PC-9 (cell line): ENCODE measurements at regions of chr3 and their contacts with region 1.

Region 1: DNA sequence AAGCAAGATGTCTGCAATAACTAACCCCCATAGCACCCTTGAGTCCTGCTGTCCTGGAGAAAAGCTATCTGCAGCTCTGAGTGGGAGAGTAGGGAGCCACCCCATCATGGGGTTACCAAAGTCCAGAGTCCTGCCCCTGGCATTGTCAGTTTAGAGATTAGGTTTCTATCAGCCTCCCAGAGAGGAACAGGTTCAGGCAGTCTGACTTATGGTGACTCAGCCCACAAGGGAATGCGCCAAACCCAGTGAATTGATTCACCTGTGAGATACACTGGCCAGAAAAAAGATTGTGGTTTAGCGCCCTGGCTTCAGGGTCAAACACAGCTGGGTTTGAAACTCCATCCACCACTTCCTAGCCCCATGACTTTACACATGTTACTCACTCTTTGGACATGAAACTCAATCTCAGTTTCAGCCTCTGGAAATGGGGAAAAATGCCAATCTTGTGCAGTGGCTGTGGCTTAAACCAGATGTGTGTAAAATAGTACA is 263.6 kb upstream of the HES1 start:
- DNase-seq: peak; percentile 94 to 100
- H3K4me3 ChIP-seq: no peak overlapping the region; the same call in 1 of the 2 replicates
- H3K27ac ChIP-seq: peak overlapping the region; percentile 94
- H3K4me1 ChIP-seq: peaks cover 83% of the 10 kb centered on the region
- H3K27me3 ChIP-seq: no peaks in the 10 kb centered on the region
- CTCF ChIP-seq: no peak

Region 2: DNA sequence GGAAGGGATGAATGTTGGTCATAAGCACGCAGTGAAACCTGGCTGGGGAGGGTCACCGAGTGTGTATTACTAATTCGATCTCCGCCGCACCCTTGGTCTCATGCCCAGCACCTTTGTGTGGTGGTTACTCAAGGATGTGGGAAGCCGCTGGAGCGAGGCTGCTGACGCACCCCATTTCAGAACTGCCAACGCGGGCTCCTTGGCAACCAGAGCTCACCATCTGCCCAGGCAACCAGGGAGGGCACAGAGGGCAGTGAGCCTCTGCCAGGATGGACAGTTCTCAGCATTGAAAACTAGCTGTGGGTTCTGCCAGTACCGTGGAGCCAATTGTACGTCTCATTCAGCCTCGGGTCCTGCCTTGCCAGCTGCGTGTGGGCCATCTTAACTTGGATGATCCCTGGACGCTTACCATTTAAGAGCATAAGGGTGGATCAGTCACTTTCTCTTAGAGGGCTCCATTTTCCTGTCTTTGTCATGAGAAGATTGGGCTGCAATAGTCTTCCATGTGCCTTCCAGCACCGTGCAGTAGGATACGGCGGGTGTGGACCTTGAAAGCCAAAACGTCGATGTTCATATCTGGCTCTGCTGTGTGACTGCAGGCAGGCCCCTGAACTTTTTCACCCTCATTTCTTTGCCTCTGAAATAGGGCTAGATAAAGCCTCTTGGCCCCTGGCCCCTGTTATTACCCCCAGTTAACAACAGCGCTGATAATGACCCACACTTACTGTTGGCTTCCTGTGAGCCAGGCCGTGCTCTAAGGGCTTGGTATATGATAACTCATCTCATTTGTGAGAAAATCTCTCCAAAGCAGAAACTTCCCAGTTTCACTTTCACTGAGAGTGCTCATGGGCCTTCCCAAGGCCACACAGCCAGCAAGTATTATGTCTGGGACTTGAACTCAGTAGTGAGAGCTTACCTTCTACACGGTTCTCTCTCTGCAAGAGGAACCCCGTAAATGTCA is 40.5 kb before region 1 on chr3:
- CTCF ChIA-PET with region 1: interaction called, 3 read pairs
- POLR2A ChIA-PET with region 1: interaction called, 7 read pairs
- intact Hi-C with region 1: loop called (anchors 1 kb)
- DNase-seq: peak; percentile 87 to 97
- H3K4me3 ChIP-seq: no peak overlapping the region
- H3K27ac ChIP-seq: peak overlapping the region; percentile 96
- H3K4me1 ChIP-seq: peaks cover 89% of the 10 kb centered on the region
- H3K27me3 ChIP-seq: no peaks in the 10 kb centered on the region
- CTCF ChIP-seq: no peak

Region 3: DNA sequence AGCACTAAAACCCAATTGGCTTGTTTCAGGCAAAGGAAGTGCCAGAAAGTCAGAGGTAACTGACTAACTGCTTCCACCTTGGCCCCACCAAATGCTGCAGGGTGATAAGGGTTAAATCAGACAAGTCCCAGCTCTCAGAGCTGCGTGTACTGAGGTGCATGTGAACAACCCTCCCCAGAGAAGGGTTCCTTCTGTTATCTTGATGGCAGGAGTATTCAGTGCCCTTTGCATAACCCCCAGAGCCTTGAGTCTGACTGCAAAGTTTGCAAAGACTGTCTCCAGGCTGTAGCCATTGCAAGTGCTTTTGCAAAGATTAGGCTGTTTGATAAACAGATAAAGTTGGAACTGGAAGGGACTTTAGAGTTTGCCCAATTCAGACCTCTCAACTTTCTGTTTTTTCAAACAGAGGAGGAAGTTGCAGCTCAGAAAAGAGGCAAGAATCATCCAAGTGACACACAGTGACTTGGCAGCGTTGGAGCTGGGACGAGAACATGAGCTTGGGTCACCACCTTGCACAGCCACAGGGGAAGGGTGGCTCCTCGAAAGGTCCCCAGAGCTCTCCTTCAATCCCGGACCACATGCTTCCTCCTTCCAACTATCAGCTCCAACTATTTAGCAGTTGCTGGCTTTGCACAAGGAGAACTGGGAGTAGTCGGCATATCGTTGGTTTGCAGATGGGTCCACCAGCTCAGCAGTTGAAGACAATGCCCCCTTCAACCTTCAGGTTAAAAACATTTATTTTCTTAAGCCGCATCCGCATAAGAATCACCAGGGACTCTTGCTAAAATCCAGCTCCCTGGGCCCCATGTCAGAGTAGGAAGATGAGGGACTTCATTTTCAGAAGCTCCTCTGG is 38.8 kb after region 1 on chr3:
- CTCF ChIA-PET with region 1: no interaction called
- POLR2A ChIA-PET with region 1: no interaction called
- intact Hi-C with region 1: loop called (anchors 1 kb)
- DNase-seq: peak; percentile 63 to 94
- H3K4me3 ChIP-seq: no peak overlapping the region
- H3K27ac ChIP-seq: peak overlapping the region; percentile 69
- H3K4me1 ChIP-seq: peaks cover 26% of the 10 kb centered on the region
- H3K27me3 ChIP-seq: no peaks in the 10 kb centered on the region
- CTCF ChIP-seq: no peak

Region 4: DNA sequence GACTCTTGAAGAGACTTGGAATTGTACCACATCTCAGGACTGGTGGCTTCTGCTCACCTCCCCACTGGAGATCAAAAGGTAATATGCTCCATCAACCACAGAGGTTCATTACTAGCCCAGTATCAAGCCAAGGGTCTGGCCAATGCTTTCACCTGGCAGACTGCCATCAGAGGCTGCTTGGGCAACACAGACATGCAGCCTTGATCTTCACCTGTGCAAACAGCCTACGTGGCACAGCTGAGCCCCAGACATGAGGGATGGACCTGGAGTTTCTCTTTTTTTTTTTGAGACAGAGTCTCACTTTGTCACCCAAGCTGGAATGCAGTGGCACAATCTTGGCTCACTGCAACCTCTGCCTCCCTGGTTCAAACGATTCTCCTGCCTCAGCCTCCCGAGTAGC is 158.1 kb after region 1 on chr3:
- CTCF ChIA-PET with region 1: no interaction called
- POLR2A ChIA-PET with region 1: no interaction called
- intact Hi-C with region 1: loop called (anchors 1 kb)
- DNase-seq: peak; percentile 69 to 88
- H3K4me3 ChIP-seq: no peak overlapping the region
- H3K27ac ChIP-seq: peak overlapping the region; percentile 40
- H3K4me1 ChIP-seq: peaks cover 53% of the 10 kb centered on the region
- H3K27me3 ChIP-seq: no peaks in the 10 kb centered on the region
- CTCF ChIP-seq: no peak

Region 5: GRCh38 chr3:194141415-194142155 is 269.3 kb after region 1 on chr3:
- CTCF ChIA-PET with region 1: interaction called, 15 read pairs
- POLR2A ChIA-PET with region 1: interaction called, 37 read pairs
- intact Hi-C with region 1: no loop called
- DNase-seq: peak; percentile 97
- H3K4me3 ChIP-seq: peak overlapping the region; percentile 46; the same call in 1 of the 2 replicates
- H3K27ac ChIP-seq: peak overlapping the region; percentile 99
- H3K4me1 ChIP-seq: peaks cover 65% of the 10 kb centered on the region
- H3K27me3 ChIP-seq: no peaks in the 10 kb centered on the region
- CTCF ChIP-seq: 0 out of 2 replicates have a peak, but pooled peaks have one; percentile 37

Region 6: DNA sequence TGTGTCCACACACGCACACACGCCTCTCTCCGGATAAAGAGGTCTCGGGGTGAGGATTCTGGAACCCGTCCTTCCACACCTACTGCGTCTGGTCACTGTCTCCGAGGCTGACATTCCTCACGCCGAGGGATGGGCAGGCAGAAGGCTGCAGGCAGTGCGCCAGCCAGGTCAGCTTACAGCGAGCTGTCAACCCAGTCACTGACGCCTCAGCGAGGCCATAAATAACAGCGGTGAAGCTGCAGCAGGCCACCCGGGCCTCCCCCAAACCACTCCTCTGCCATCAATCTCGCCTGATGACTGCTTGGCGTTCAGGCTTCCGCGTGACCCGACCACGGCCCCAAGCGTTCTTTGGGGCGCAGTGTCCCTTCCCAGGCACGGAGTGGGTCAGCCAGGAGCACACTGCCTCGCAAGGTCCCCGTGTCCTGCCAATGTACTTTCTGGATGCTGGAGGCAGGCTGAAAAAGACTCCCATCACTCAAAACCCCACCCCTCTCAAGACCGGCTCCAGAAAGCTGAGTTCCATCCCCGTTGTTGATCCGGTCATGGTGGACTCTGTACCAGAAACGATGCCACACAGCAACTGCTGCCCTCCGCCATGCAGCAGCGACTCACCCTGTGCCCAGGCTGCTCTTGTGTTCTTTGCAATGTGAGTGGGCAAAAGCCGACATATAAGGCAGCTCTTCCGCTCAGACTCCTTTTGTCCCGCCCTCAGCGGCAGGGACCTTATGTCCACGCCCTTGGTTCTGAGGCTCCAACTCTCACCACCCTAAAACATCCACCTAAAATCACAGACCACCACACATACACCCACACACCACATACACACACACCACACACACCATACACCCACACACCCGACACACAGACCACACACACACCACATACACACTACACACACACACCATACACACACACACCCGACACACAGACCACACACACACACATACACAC is 451.8 kb after region 1 on chr3:
- CTCF ChIA-PET with region 1: no interaction called
- POLR2A ChIA-PET with region 1: interaction called, 15 read pairs
- intact Hi-C with region 1: loop called (anchors 1 kb)
- DNase-seq: peak; percentile 60 to 72
- H3K4me3 ChIP-seq: no peak overlapping the region
- H3K27ac ChIP-seq: peak overlapping the region; percentile 98
- H3K4me1 ChIP-seq: peaks cover 39% of the 10 kb centered on the region
- H3K27me3 ChIP-seq: no peaks in the 10 kb centered on the region
- CTCF ChIP-seq: no peak

Region 7: GRCh38 chr3:194431553-194431952 is 559.2 kb after region 1 on chr3:
- CTCF ChIA-PET with region 1: no interaction called
- POLR2A ChIA-PET with region 1: no interaction called
- intact Hi-C with region 1: no loop called
- DNase-seq: no peak
- H3K4me3 ChIP-seq: no peak overlapping the region
- H3K27ac ChIP-seq: no peak overlapping the region
- H3K4me1 ChIP-seq: no peaks in the 10 kb centered on the region
- H3K27me3 ChIP-seq: no peaks in the 10 kb centered on the region
- CTCF ChIP-seq: no peak